ENCODE measurements at regions of chr19 and their contacts with region 1.

Region 1: GRCh38 chr19:9934132-9934950 is 2.0 kb downstream of the OLFM2 start:
- ATAC-seq: peak; percentile 51 to 73 (median 60)
- H3K4me3 ChIP-seq: peak overlapping the region; percentile 57 to 94 (median 68)
- H3K27ac ChIP-seq: no peak overlapping the region
- H3K4me1 ChIP-seq: peaks cover 10 to 17% of the 10 kb centered on the region in 2 donors

Region 2: DNA sequence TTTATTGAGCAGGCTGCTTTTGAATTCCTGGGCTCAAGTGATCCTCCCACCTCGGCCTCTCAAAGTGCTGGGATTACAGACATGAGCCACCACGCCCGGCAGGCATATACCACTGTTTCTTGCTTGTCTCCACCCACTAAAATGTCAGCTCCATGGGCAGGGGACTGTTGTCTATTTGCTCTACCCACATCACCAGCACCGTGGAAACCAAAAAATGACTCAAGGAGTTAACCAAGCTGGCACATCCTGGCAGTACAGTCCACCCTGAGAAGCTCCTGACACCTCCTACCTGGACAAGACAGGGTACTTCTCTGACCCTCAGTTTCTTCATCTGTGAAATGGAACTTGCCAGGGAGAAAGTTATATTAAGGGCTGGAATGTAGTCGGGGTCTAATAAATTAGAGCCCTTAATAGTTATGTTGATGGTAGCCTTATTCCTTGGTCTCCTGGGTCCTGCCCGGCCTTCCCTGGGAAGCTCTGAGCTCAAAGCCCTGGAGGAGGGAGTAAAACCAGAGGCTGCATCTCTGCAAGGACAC is 92.9 kb after region 1 on chr19:
- in situ Hi-C with region 1: loop called in 4 of 9 experiments (anchors 10 to 25 kb)
- ATAC-seq: peak in 4 of 8 experiments; percentile 8 to 49 (median 11)
- H3K4me3 ChIP-seq: peak overlapping the region in 1 of 5 donors; percentile 17
- H3K27ac ChIP-seq: no peak overlapping the region
- H3K4me1 ChIP-seq: no peaks in the 10 kb centered on the region

Region 3: DNA sequence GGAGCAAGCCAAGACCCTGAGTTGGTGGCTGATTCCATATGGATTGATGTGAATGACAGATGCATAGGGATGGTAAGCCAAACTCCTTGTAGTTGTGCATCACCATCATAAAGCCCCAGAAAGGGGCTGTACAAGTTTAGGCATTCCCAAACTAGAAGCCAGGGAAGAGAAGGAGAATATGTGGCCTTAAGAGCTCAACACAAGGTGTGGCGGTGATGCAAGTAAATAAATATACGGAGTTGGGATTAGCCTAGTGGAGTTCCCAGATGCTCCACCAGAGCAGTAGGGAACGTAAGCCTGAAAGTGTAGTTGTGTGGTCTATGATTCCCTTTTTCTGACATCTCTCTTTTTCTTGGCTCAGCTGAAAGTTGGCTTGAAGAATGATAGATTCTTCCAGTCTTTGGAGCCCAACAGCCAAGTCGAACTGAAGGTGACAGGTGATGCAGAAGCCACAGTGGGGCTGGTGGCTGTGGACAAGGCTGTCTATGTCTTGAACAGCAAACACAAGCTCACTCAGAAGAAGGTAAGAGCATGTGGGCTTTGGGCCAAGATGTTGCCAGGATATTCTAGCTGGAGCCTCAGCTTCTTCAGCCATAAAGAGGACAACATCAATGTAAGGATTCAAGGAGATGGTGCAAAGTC is 109.1 kb after region 1 on chr19:
- in situ Hi-C with region 1: loop called in 3 of 9 experiments (anchors 25 kb)
- ATAC-seq: no peak
- H3K4me3 ChIP-seq: no peak overlapping the region
- H3K27ac ChIP-seq: no peak overlapping the region
- H3K4me1 ChIP-seq: no peaks in the 10 kb centered on the region

Region 4: GRCh38 chr19:10230861-10231611 is 296.7 kb after region 1 on chr19 and contains the start of gene S1PR2:
- in situ Hi-C with region 1: loop called in 3 of 9 experiments (anchors 25 kb)
- ATAC-seq: peak; percentile 68 to 89 (median 72)
- H3K4me3 ChIP-seq: peak within 1 kb of the TSS; percentile 76 to 99 (median 87)
- H3K27ac ChIP-seq: peak within 1 kb of the TSS; percentile 76 to 85
- H3K4me1 ChIP-seq: peaks cover 3 to 29% of the 10 kb centered on the region in 2 donors
- total RNA-seq, gene S1PR2: 1.5 to 14.8 (median 10.1) TPM

Region 5: DNA sequence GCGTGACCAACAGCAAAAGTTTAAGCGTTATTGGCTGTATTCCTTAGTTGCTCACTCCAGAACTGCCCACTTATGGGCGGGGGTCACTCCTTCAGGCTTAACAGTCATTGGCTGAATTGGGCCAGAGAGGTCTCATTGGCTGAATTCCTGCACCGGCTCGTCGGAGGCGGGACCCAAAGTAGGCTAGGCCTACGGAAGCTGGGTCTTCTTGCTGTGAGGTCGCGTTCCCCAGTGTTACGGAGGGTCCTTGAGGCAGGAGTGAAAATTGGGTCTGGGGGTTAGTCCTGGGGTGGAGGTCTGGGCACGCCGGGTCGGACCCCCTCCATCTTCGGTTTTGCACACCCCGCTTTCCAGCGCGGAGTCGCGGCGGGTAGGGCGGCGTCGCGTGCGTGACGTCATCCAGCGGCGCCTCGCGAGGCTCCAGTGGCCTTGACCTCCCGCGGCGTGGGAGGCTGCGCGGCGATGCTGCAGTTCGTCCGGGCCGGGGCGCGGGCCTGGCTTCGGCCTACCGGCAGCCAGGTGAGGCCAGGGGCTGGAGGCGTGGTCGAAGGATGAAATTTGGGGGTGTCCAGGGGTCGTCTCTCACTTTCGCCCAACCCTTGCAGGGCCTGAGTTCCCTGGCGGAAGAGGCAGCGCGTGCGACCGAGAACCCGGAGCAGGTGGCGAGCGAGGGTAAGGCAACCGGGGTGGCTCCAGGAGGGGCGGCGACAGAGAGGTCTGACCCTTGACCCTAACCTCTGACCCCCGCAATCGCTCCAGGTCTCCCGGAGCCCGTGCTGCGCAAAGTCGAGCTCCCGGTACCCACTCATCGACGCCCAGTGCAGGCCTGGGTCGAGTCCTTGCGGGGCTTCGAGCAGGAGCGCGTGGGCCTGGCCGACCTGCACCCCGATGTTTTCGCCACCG is 317.7 kb after region 1 on chr19 and contains the start of gene MRPL4:
- in situ Hi-C with region 1: loop called in 4 of 9 experiments (anchors 25 kb)
- ATAC-seq: peak; percentile 93 to 97 (median 94)
- H3K4me3 ChIP-seq: peak within 1 kb of the TSS; percentile 64 to 94 (median 84)
- H3K27ac ChIP-seq: peak within 1 kb of the TSS; percentile 87 to 92
- H3K4me1 ChIP-seq: peaks cover 5 to 7% of the 10 kb centered on the region in 2 donors
- total RNA-seq, gene MRPL4: 17.9 to 80.5 (median 34.4) TPM

Region 6: GRCh38 chr19:10380313-10381102 is 446.2 kb after region 1 on chr19 and contains the start of gene TYK2:
- in situ Hi-C with region 1: loop called in 1 of 9 experiments (anchors 25 kb)
- ATAC-seq: peak; percentile 92 to 98 (median 95)
- H3K4me3 ChIP-seq: peak within 1 kb of the TSS; percentile 77 to 99 (median 83)
- H3K27ac ChIP-seq: peak within 1 kb of the TSS; percentile 81 to 95
- H3K4me1 ChIP-seq: peaks cover 10 to 11% of the 10 kb centered on the region in 2 donors
- total RNA-seq, gene TYK2: 29.4 to 110 (median 62.1) TPM

Measured in motor neuron (in vitro differentiated cells).